ENCODE measurements at regions of chr19 and their contacts with region 1.

Region 1: GRCh38 chr19:9796113-9796773 is 22.6 kb downstream of the FBXL12 start:
- DNase-seq: peak; percentile 86 to 88
- ATAC-seq: peak; percentile 44

Region 2: GRCh38 chr19:9139609-9140158 is 656.6 kb before region 1 on chr19:
- intact Hi-C with region 1: loop called in 1 of 2 experiments (anchors 10 kb)
- DNase-seq: no peak
- ATAC-seq: peak; percentile 6

Region 3: DNA sequence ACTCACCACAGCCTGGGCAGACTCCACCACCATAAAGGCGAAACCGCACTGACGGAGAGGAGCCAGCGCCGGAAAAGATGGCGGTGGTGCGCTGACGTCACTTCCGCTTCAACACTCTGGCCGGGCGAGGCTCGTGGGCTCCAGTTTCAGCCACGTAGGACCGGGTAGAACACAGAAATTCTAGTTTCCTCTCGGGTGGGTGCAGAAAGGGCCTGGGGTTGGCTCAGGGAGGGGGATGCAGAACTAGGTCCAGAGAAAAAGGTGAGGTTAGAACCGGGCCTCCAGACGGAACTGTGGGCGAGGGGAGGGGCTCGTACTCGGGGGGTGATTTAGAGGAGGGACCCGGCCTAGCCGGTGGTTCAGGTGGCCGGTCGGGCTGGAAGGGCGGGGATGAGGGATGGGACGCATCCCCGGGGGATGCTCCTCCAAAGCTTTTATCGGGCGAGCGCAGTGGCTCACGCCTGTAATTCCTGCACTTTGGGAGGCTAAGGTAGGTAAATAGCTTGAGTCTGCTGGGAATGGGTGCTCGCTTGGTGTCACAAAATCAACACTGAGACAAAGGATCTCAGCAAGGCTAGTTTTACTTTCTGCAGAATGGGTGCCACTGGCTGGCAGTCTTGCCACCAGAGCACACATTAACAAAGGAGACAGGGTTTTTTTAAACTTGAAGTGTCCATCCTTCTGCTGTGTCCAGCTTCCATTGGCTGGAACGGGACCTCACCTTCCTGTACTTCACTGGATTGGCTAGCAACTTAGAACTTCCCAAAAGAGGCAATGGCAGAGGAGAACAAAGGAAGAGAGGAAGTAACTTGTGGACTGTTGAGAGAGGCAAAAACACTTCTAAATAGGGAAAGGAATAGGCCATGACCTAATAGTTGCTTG is 174.8 kb before region 1 on chr19 and contains the start of gene ZNF561:
- intact Hi-C with region 1: loop called (anchors 5 to 10 kb)
- DNase-seq: peak; percentile 76 to 92
- ATAC-seq: peak; percentile 94
- total RNA-seq, gene ZNF561: 23.1 to 26.3 TPM

Region 4: DNA sequence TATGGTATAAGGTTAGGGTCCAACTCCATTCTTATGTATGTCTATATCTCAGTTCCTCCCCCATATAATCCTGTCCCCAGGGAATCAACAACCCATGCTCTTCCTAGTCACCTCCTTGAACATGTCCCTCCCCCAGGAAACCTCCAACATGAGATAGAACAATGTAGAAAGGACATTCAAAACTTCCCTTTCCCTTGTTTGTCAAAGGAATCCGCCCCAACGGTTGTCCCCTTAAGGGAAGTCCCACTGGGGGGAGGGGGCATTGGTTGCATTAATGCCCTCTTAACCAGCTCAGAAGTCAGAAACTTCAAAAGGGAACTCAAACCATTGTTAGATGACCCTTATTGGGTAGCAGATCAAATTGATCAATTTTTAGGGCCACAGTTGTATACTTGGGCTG is 168.4 kb before region 1 on chr19:
- intact Hi-C with region 1: loop called (anchors 5 to 10 kb)
- DNase-seq: no peak
- ATAC-seq: no peak